ENCODE measurements at regions of chr1 and their contacts with region 1.

Region 1: GRCh38 chr1:34844252-34844634 is 15.3 kb downstream of the SMIM12 start:
- H3K4me3 ChIP-seq: no peak overlapping the region
- H3K27ac ChIP-seq: no peak overlapping the region
- H3K4me1 ChIP-seq: no peaks in the 10 kb centered on the region
- CTCF ChIP-seq: no peak

Region 2: GRCh38 chr1:34786521-34787325 is 57.5 kb before region 1 on chr1:
- CTCF ChIA-PET with region 1: interaction called, 13 read pairs
- POLR2A ChIA-PET with region 1: no interaction called
- H3K4me3 ChIP-seq: no peak overlapping the region
- H3K27ac ChIP-seq: no peak overlapping the region
- H3K4me1 ChIP-seq: no peaks in the 10 kb centered on the region
- CTCF ChIP-seq: peak; percentile 86